ENCODE measurements at regions of chr14 and their contacts with region 1.

Region 1: GRCh38 chr14:37985826-37986470 is 221.8 kb upstream of the SSTR1 start:
- DNase-seq: peak; percentile 63
- H3K4me3 Mint-ChIP-seq: no peak overlapping the region
- H3K27ac Mint-ChIP-seq: no peak overlapping the region
- H3K4me1 Mint-ChIP-seq: no peaks in the 10 kb centered on the region
- H3K27me3 Mint-ChIP-seq: no peaks in the 10 kb centered on the region

Region 2: DNA sequence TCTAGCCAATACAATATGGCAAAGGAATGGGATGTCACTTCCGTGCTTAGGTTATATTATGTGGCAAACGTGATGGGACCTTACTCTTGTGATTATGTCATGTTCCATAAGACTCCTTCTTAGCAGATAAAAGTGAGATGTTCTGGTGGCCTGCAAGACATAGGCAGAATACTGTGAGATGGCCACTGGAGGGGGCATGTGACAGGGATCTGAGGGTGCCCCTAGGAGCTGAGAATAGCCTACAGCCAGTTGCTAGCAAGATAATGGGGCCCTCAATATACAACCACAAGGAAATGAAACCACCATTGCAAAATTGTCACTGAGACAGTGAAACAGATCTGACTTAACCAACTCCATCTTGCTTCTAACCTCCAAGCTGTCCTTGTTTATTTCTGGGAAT is 70.3 kb after region 1 on chr14:
- CTCF ChIA-PET with region 1: no interaction called
- POLR2A ChIA-PET with region 1: no interaction called
- intact Hi-C with region 1: no loop called
- DNase-seq: no peak
- H3K4me3 Mint-ChIP-seq: no peak overlapping the region
- H3K27ac Mint-ChIP-seq: no peak overlapping the region
- H3K4me1 Mint-ChIP-seq: no peaks in the 10 kb centered on the region
- H3K27me3 Mint-ChIP-seq: no peaks in the 10 kb centered on the region

Region 3: DNA sequence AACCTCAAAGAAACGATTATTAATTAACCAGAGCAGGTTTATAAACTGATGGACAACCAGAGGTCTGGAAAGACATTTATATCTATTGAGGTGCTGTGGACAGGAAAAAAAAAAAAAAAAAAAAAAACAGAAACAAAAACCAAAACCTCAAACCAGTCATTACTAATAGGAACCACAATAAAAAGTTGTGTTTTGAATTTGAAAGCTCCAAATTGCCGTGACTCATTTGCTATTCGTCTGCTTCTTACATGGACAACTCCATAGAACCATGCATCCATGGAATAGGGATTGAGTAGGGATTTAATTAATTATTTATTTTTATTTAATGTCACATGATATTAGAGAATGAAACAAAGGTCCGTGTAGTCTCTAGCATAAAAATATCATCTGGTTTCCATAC is 87.7 kb after region 1 on chr14:
- CTCF ChIA-PET with region 1: no interaction called
- POLR2A ChIA-PET with region 1: no interaction called
- intact Hi-C with region 1: loop called (anchors 5 kb)
- DNase-seq: no peak
- H3K4me3 Mint-ChIP-seq: peak overlapping the region; percentile 26
- H3K27ac Mint-ChIP-seq: peak overlapping the region; percentile 70
- H3K4me1 Mint-ChIP-seq: peaks cover 69% of the 10 kb centered on the region
- H3K27me3 Mint-ChIP-seq: no peaks in the 10 kb centered on the region

Region 4: GRCh38 chr14:38138473-38139138 is 152.7 kb after region 1 on chr14:
- CTCF ChIA-PET with region 1: no interaction called
- POLR2A ChIA-PET with region 1: no interaction called
- intact Hi-C with region 1: loop called (anchors 10 kb)
- DNase-seq: no peak
- H3K4me3 Mint-ChIP-seq: no peak overlapping the region
- H3K27ac Mint-ChIP-seq: no peak overlapping the region
- H3K4me1 Mint-ChIP-seq: peaks cover 6% of the 10 kb centered on the region
- H3K27me3 Mint-ChIP-seq: no peaks in the 10 kb centered on the region

Region 5: GRCh38 chr14:38197001-38197783 is 211.2 kb after region 1 on chr14:
- CTCF ChIA-PET with region 1: interaction called, 26 read pairs
- POLR2A ChIA-PET with region 1: no interaction called
- intact Hi-C with region 1: loop called (anchors 1 kb)
- DNase-seq: no peak
- H3K4me3 Mint-ChIP-seq: no peak overlapping the region
- H3K27ac Mint-ChIP-seq: no peak overlapping the region
- H3K4me1 Mint-ChIP-seq: peaks cover 14% of the 10 kb centered on the region
- H3K27me3 Mint-ChIP-seq: no peaks in the 10 kb centered on the region

Measured in activated CD4-positive, alpha-beta memory T cell treated with anti-CD3 and anti-CD28 coated beads for 36 hours (primary cell).